Common myeloid progenitor, CD34-positive (primary cell): ENCODE measurements at regions of chr18 and their contacts with region 1.

Region 1: GRCh38 chr18:31990823-31991222 is 27.8 kb upstream of the RNF125 start:
- DNase-seq: no peak
- H3K4me3 ChIP-seq: no peak overlapping the region
- H3K27ac ChIP-seq: no peak overlapping the region
- H3K4me1 ChIP-seq: peaks cover 0 to 9% (median 0%) of the 10 kb centered on the region in 4 experiments
- H3K27me3 ChIP-seq: no peaks in the 10 kb centered on the region

Region 2: GRCh38 chr18:31695989-31696388 is 294.8 kb before region 1 on chr18:
- CTCF ChIA-PET with region 1: no interaction called
- POLR2A ChIA-PET with region 1: no interaction called
- DNase-seq: no peak
- H3K4me3 ChIP-seq: no peak overlapping the region
- H3K27ac ChIP-seq: no peak overlapping the region
- H3K4me1 ChIP-seq: no peaks in the 10 kb centered on the region
- H3K27me3 ChIP-seq: no peaks in the 10 kb centered on the region

Region 3: GRCh38 chr18:31977270-31977872 is 13.5 kb before region 1 on chr18:
- CTCF ChIA-PET with region 1: interaction called, 16 read pairs
- POLR2A ChIA-PET with region 1: no interaction called
- DNase-seq: peak; percentile 20 to 45 (median 40)
- H3K4me3 ChIP-seq: no peak overlapping the region
- H3K27ac ChIP-seq: no peak overlapping the region
- H3K4me1 ChIP-seq: no peaks in the 10 kb centered on the region
- H3K27me3 ChIP-seq: no peaks in the 10 kb centered on the region

Region 4: DNA sequence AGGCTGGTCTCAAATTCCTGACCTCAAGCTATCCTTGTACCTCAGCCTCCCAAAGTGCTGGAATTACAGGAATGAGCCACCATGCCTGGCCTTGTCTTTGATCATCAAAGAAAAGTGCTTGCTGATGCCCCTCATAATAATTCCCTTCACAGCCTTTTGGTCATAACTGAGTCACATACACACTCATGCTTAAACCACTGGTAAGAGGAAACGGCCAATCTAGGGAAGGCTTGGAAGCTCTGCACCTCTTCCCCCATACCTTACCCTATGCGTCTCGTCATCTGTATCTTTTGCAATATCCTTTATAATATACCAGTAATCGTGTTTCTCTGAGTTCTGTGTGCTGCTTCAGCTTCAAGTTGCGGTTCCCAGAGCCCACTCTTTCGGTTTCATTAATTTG is 96.0 kb after region 1 on chr18:
- CTCF ChIA-PET with region 1: no interaction called
- POLR2A ChIA-PET with region 1: no interaction called
- DNase-seq: no peak
- H3K4me3 ChIP-seq: no peak overlapping the region
- H3K27ac ChIP-seq: no peak overlapping the region
- H3K4me1 ChIP-seq: peaks cover 19 to 47% (median 33%) of the 10 kb centered on the region in 4 experiments
- H3K27me3 ChIP-seq: no peaks in the 10 kb centered on the region